GM13977 (cell line): ENCODE measurements at regions of chr19 and their contacts with region 1.

Region 1: DNA sequence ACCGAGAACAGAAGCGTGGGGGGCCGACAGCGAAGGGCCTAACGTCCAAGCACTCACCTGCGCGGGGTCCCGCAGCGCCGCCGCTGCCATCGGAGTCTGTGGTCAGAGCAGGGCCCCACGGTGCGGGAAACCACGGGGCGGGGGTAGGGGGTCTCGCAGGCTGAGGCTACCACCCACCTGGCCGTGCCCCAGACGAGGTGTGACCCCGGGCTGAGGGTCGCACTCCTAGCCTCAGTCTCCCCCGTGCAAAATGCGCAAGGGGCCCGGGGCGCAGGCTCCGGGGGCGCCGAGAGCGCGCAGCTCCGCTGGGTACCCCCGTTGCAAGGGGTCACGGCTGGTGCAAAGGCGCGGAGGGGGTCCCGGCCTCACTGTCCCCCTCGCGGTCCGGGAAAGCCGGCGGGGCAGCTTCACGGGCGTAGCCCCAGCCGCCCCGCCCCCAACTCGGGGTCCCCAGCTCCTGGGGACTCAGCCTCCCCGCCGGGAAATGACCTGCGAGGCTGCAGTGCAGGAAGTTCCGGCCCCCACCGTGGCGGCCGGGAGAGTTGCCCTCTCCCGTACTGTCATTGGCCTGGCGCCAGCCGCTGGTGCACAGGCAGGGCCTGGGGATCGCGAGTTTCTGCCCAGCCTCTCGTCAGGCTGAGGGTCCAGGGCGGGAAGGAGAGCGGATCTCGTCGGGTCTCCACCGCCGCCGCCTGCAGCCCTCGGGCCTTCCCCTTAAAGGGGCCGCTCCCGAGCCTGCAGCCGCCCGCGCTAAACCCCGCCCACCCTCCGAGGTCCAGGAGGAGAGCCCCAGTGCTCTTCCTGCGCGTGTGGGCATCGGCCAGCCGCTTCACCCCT is at the start of gene ZNF792:
- DNase-seq: peak; percentile 84
- CTCF ChIP-seq: no peak

Region 2: GRCh38 chr19:34867631-34868030 is 96.2 kb before region 1 on chr19:
- in situ Hi-C with region 1: no loop called
- DNase-seq: no peak
- CTCF ChIP-seq: no peak

Region 3: DNA sequence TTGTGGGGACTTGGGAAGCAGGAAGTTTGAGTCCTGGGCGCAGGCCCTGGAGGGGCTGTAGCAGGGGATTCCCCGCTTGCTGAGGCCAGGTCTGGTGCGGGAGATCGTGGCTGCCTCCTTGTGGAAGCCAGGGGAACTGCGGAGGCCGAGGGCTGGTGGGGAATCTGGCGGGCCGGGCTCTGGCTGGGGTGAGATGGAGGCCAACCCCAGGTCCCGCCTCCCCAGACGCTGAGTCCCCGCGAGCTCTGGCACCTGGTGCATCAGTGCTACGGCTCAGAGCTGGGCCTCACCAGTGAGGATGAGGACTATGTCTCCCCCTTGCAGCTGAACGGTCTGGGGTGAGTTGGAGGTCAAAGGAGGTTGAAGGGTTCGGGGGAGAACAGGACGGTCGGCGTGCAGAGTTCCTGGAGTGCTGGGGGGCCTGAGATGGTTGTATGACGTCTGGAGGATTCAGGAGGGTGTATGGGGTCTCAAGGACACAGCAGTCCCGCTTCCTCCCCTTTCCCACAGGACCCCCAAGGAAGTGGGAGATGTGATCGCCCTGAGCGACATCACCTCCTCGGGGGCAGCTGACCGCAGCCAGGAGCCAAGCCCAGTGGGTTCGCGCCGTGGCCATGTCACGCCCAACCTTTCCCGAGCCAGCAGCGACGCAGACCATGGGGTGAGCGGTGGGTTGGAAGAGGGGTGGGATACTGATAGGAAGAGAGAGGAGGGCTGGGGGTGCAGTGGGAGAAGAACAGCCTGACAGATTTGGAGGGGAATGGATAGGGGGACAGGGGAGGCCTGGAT is 49.4 kb after region 1 on chr19:
- in situ Hi-C with region 1: loop called (anchors 10 kb)
- DNase-seq: peak; percentile 92
- CTCF ChIP-seq: peak; percentile 98

Region 4: GRCh38 chr19:35090506-35091237 is 126.9 kb after region 1 on chr19:
- in situ Hi-C with region 1: no loop called
- DNase-seq: peak; percentile 85
- CTCF ChIP-seq: peak; percentile 64